Left lung (tissue), 14 donors: ENCODE measurements at regions of chr11 and their contacts with region 1.

Region 1: DNA sequence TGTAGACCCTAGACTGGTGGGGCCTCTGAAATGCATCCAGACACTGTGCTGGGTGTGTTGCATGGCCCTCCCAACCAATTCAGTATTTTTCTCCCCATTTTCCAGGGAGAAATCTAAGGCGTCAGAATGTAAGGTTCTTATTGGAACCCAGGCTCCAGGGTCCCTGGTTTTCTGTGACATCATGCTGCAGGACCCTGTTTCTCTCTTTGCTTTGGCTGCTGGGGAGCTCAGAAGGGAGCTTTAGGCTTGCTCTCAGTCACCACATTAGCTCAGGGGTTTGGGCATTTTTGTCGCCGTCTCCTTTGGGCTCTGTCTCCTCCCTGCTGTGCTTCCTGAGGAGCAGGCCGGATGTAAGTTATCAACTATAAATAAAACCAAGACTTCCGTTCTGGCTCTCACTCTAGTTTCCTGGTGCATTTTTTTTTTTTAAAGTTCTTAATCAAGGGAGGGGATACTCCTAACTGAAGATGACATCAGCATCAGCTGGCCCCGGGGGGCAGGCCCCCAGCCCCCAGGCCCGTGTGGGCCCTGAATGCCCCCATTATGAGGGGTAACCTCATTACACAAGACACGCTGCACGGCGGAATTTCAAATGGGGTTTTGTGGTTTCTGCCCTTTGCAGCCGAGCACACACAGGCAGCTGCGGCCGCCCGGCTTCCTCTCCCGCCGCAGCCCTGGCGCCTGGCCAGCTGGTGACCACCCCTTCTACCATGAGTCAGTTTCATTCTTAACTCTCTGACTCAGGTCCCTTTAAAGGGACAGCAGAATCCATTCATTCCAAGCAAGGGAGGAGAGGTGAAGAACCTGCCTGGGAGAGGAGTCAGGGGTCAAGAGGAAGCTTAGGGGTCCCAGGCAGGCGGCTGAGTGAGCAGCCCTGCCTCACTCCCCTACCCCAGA is 3.2 kb downstream of the MYEOV start:
- DNase-seq: peak; percentile 87 to 98 (median 94)
- ATAC-seq: peak; percentile 63
- H3K4me3 ChIP-seq: peak overlapping the region in 1 of 2 donors; percentile 25
- H3K27ac ChIP-seq: peak overlapping the region; percentile 69 to 97
- H3K4me1 ChIP-seq: peaks cover 39 to 95% of the 10 kb centered on the region in 2 donors
- H3K27me3 ChIP-seq: no peaks in the 10 kb centered on the region
- CTCF ChIP-seq: no peak

Region 2: GRCh38 chr11:68773521-68774193 is 523.5 kb before region 1 on chr11:
- intact Hi-C with region 1: no loop called
- DNase-seq: peak in 2 of 4 donors; percentile 66 to 89
- ATAC-seq: peak; percentile 21
- H3K4me3 ChIP-seq: no peak overlapping the region
- H3K27ac ChIP-seq: no peak overlapping the region
- H3K4me1 ChIP-seq: no peaks in the 10 kb centered on the region
- H3K27me3 ChIP-seq: no peaks in the 10 kb centered on the region
- CTCF ChIP-seq: no peak

Region 3: DNA sequence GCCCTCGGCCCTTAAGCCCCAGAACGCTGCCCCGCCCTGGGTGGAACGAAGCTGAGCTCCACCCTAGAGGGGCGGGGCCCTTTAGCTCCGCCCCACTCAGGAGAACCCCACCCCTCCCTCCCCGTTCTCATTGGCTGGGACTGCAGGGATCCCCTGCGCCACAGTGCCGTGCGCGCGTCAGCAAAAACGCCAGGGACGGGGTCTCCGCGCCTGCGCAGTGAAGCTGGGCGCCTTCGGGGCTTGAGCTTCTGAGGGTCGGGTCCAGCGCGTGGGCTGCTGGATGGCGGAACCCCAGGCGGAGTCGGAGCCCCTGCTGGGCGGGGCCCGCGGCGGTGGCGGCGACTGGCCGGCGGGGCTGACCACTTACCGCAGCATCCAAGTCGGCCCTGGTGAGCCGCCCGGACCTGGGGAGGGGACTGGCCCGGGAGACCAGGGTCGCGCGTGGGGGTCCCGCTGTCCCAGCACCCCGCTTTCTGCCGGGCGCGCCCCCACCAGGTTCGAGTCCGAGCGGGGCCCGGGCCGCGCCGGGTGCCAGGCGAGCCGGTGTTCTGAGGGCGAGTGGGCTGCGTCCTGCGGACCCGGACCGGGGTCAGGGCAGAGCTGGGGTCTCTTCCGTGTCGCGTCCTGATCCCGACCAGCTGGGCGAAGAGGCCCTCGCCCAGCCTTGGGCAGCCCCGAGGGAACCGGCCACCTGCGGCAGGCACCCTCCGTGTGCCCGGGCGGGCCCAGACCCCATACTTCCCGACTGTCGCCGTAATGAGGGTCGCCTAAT is 248.2 kb before region 1 on chr11 and contains the start of gene TPCN2:
- intact Hi-C with region 1: no loop called
- DNase-seq: peak; percentile 94 to 99 (median 96)
- ATAC-seq: peak; percentile 97
- H3K4me3 ChIP-seq: peak within 1 kb of the TSS; percentile 53 to 90
- H3K27ac ChIP-seq: peak within 1 kb of the TSS; percentile 83 to 85
- H3K4me1 ChIP-seq: peaks cover 7 to 61% of the 10 kb centered on the region in 2 donors
- H3K27me3 ChIP-seq: no peaks in the 10 kb centered on the region
- CTCF ChIP-seq: no peak
- polyA plus RNA-seq, gene TPCN2: 12.1 to 17.4 (median 14.7) TPM

Region 4: DNA sequence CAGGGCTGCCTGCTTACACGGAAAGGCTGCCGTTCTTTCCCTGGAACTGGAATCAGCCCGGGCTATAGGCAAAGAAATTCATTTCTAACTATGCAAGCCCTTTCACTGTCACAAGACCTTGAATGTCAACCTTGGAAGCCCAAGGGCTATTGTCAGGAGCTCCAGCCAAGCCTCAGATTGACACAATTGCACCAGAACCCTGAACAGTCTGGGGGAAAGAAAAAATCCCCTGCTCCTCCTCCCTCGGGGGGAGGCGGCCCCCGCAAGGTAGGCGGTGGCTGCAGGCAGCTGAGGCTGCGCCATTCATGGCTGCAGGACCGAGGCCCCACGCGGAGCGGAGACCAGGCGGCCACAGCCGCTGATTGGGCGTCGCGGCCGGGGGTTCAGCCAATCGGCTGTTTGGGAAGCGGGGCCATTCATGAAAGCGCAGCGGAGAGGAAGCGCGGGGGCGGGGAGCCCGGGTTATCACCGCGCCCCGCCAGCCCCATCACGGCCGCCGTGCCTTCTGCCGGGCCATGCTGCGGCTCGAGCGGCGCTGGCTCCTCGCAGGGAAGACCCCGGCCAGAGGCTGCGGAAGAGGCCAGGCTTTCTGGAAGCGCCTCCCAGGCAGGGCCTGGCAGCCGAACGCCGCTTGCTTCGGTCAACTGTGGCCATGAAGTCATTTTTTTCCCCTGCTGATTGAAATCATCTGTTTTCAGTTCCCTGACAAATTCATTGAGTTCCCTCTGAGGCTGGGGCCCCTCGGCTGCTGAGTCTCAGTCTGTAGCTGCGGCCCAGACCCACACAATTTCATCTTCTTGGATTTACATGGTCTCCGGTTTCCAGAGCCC is 146.2 kb after region 1 on chr11:
- intact Hi-C with region 1: loop called in 1 of 2 experiments (anchors 10 kb)
- DNase-seq: peak; percentile 90 to 96 (median 93)
- ATAC-seq: peak; percentile 85
- H3K4me3 ChIP-seq: peak overlapping the region; percentile 4 to 20
- H3K27ac ChIP-seq: peak overlapping the region; percentile 78 to 79
- H3K4me1 ChIP-seq: peaks cover 29 to 41% of the 10 kb centered on the region in 2 donors
- H3K27me3 ChIP-seq: peaks cover 0 to 14% of the 10 kb centered on the region in 2 donors
- CTCF ChIP-seq: no peak

Region 5: DNA sequence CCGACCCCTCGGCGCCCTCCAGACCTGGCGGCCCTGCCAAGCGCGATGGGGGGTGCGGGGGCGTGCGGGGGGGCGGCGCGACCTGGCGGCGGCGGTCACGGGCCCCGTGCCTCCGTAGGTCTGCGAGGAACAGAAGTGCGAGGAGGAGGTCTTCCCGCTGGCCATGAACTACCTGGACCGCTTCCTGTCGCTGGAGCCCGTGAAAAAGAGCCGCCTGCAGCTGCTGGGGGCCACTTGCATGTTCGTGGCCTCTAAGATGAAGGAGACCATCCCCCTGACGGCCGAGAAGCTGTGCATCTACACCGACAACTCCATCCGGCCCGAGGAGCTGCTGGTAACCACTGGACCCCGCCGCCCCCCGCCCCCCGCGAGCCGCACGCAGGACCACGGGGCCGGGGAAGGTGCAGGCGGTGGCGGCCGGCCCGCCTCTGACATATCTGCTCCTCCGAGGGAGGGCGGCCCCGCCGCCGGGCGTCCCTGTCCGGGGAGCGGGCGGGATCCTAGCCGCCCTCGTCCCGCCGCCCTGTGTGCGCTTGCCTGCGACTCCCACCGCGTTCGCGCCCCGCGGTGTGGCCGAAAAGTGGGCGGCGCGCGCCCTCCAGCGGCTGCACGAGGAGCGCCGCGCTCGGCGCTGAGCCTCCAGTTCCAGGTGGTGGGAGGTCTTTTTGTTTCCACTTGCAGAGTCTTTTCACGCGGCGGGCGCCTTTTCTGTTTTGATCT is 345.9 kb after region 1 on chr11:
- intact Hi-C with region 1: loop called (anchors 2 to 10 kb)
- DNase-seq: peak; percentile 72 to 95 (median 86)
- ATAC-seq: peak; percentile 66
- H3K4me3 ChIP-seq: peak overlapping the region; percentile 51 to 78
- H3K27ac ChIP-seq: peak overlapping the region; percentile 66 to 82
- H3K4me1 ChIP-seq: peaks cover 25 to 68% of the 10 kb centered on the region in 2 donors
- H3K27me3 ChIP-seq: peaks cover 8 to 66% of the 10 kb centered on the region in 2 donors
- CTCF ChIP-seq: peak; percentile 81 to 94